Activated B cell treated with CpG ODN at 0.5 μM for 24 hours (primary cell): ENCODE measurements at regions of chr2 and their contacts with region 1.

Region 1: GRCh38 chr2:44167940-44168680 is 565 bp upstream of the PPM1B start:
- DNase-seq: peak; percentile 82
- ATAC-seq: peak; percentile 79
- H3K4me3 Mint-ChIP-seq: peak overlapping the region; percentile 99
- H3K27ac Mint-ChIP-seq: peak overlapping the region; percentile 100
- H3K4me1 Mint-ChIP-seq: peaks cover 41% of the 10 kb centered on the region
- H3K27me3 Mint-ChIP-seq: no peaks in the 10 kb centered on the region
- CTCF ChIP-seq: no peak

Region 2: GRCh38 chr2:43219383-43220228 is 948.5 kb before region 1 on chr2:
- CTCF ChIA-PET with region 1: no interaction called
- POLR2A ChIA-PET with region 1: no interaction called
- intact Hi-C with region 1: loop called (anchors 2 kb)
- DNase-seq: peak; percentile 58
- ATAC-seq: peak; percentile 54
- H3K4me3 Mint-ChIP-seq: peak overlapping the region; percentile 92
- H3K27ac Mint-ChIP-seq: peak overlapping the region; percentile 99
- H3K4me1 Mint-ChIP-seq: peaks cover 71% of the 10 kb centered on the region
- H3K27me3 Mint-ChIP-seq: peaks cover 2% of the 10 kb centered on the region
- CTCF ChIP-seq: no peak

Region 3: DNA sequence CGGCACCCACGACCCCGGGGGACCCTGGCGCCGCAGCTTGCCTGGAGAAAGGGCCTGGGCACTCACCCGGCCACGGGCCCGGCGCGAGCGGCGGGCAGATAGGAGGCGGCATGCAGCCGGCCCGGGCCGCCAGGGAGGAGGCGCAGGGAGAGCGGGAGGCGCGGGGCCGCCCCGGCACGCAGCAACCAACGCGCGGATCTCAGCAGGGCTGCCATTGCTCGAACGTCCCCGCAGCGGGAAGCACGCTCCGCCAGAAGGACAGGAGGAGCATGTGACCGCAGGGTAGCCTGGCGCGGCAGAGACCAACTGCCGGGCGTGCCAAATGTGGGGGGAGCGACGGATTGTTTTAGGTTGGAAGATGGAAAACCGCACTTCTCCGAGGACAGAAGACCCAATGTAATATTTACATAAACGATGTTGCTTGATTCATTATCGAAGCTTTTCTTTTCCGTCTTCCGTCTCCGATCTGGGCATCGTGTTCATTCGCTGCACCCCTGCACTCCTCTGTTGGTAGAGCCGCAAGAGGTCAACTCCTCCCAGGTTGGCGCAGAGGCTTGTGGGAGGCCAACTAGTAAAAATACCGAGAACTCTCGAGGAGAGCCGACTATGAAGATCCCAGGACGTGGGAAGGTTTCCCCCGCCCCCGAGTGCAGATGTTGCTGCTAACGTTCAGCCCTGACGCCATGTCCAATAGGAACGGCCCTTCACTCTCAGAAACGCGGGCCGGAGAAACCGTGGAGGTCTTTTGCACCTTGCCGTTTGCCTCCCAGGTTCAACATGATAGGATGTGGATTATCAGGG is 172.2 kb before region 1 on chr2 and contains the start of gene LRPPRC:
- CTCF ChIA-PET with region 1: no interaction called
- POLR2A ChIA-PET with region 1: interaction called, 8 read pairs
- intact Hi-C with region 1: loop called (anchors 1 kb)
- DNase-seq: peak; percentile 74
- ATAC-seq: peak; percentile 96
- H3K4me3 Mint-ChIP-seq: peak within 1 kb of the TSS; percentile 92
- H3K27ac Mint-ChIP-seq: peak within 1 kb of the TSS; percentile 98
- H3K4me1 Mint-ChIP-seq: peaks cover 49% of the 10 kb centered on the region
- H3K27me3 Mint-ChIP-seq: no peaks in the 10 kb centered on the region
- CTCF ChIP-seq: no peak
- total RNA-seq, gene LRPPRC: 114 and 120 TPM in 2 replicates

Region 4: GRCh38 chr2:44237221-44237620 is 69.1 kb after region 1 on chr2:
- CTCF ChIA-PET with region 1: no interaction called
- POLR2A ChIA-PET with region 1: interaction called, 3 read pairs
- intact Hi-C with region 1: loop called (anchors 2 kb)
- DNase-seq: no peak
- ATAC-seq: peak; percentile 74
- H3K4me3 Mint-ChIP-seq: peak overlapping the region; percentile 11
- H3K27ac Mint-ChIP-seq: peak overlapping the region; percentile 27
- H3K4me1 Mint-ChIP-seq: peaks cover 35% of the 10 kb centered on the region
- H3K27me3 Mint-ChIP-seq: no peaks in the 10 kb centered on the region
- CTCF ChIP-seq: no peak

Region 5: GRCh38 chr2:44941551-44942234 is 773.6 kb after region 1 on chr2 and contains the start of gene SIX3:
- CTCF ChIA-PET with region 1: no interaction called
- POLR2A ChIA-PET with region 1: interaction called, 5 read pairs
- intact Hi-C with region 1: loop called (anchors 5 kb)
- DNase-seq: no peak
- ATAC-seq: peak; percentile 69
- H3K4me3 Mint-ChIP-seq: peak within 1 kb of the TSS; percentile 85
- H3K27ac Mint-ChIP-seq: peak within 1 kb of the TSS; percentile 46
- H3K4me1 Mint-ChIP-seq: peaks cover 63% of the 10 kb centered on the region
- H3K27me3 Mint-ChIP-seq: peaks cover 71% of the 10 kb centered on the region
- CTCF ChIP-seq: no peak
- total RNA-seq, gene SIX3: not detected in 2 replicates